Sigmoid colon (tissue), 7 donors: ENCODE measurements at regions of chr10 and their contacts with region 1.

Region 1: DNA sequence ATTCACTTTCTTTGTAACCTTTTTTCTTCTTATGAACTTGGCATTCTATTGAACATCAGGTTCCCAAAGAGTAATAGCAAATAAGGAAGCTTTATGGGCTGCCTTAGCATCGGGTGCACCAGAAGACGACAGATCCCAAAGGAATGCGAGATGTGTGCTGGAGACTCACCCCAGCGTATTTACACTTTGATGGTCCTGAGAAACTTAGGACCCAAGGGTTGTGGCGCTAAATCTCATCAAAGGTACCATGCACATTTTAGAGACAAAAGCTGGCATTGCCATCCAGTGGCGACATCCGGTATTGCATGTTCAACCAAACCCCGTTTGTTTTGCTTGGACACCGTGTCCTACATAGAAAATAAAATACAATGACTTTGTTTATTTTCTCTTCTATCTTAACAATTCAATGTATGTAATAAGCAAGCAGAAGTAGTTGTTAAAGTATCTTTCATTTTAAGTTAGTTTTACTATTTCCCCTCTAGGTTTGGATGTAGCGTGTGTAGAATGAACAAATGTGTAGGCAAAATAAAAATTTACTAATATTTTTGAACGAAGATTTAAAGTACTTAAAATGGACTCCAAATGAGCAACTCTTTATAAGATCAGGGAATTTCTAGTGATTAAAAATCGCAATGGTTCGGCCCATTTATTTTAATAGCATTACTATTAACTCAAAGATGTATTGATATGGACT is 1154.8 kb downstream of the GATA3 start:
- DNase-seq: peak; percentile 69
- H3K4me3 ChIP-seq: no peak overlapping the region
- H3K27ac ChIP-seq: no peak overlapping the region
- H3K4me1 ChIP-seq: no peaks in the 10 kb centered on the region
- H3K27me3 ChIP-seq: no peaks in the 10 kb centered on the region
- CTCF ChIP-seq: peak; percentile 16 to 91 (median 84)
- EP300 ChIP-seq: no peak
- POLR2A ChIP-seq: no peak

Region 2: GRCh38 chr10:7872041-7872442 is 1337.2 kb before region 1 on chr10:
- intact Hi-C with region 1: loop called (anchors 2 kb)
- DNase-seq: no peak
- H3K4me3 ChIP-seq: peak overlapping the region in 2 of 4 donors; percentile 34
- H3K27ac ChIP-seq: no peak overlapping the region
- H3K4me1 ChIP-seq: no peaks in the 10 kb centered on the region
- H3K27me3 ChIP-seq: no peaks in the 10 kb centered on the region
- CTCF ChIP-seq: peak in 3 of 4 experiments; percentile 51 to 78 (median 63)
- EP300 ChIP-seq: no peak
- POLR2A ChIP-seq: no peak

Region 3: DNA sequence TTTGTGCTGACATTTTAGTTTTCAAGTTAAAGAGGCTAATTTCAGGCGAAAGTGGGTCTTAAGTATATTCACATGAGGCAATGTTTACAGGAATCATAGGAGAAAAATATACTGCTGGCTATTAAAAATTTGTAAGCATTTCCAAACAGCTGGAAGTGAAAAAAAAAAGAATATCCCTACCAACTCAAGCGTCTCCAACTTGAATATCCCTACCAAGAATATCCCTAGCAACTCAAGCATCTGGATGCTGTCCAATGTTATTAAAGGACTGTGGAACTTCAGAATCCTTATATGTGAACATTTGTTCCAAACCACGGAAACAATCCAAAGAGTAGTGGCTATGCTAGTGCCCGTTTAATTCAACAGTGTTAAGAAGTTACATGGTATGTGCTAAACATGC is 148.2 kb after region 1 on chr10:
- intact Hi-C with region 1: no loop called
- DNase-seq: no peak
- H3K4me3 ChIP-seq: no peak overlapping the region
- H3K27ac ChIP-seq: no peak overlapping the region
- H3K4me1 ChIP-seq: peaks cover 0 to 8% (median 3%) of the 10 kb centered on the region in 4 donors
- H3K27me3 ChIP-seq: no peaks in the 10 kb centered on the region
- CTCF ChIP-seq: no peak
- EP300 ChIP-seq: no peak
- POLR2A ChIP-seq: no peak